SK-N-SH (cell line): ENCODE measurements at regions of chr1 and their contacts with region 1.

Region 1: DNA sequence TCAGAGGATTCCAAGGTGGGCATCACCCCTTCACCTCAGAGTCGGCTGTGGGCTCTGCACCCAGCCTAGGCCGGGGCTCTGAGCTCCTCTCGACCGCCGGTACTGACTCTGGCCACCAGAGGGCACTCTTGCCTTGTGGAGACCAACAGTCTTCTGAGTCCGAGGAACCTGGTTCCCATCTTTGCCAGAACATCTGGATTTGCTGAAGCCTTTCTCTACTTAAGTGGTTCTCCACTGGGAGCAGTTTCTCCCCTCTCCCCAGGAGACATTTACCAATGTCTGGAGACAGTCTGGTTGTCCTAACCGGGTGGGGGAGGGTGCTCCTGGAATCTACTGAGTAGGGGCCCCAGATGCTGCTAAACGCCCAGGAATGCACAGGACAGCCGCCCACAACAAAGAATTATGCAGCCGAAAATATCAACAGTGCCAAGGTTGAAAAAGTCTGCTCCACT is 9.4 kb downstream of the ETV3L start:
- DNase-seq: peak; percentile 88
- H3K4me3 ChIP-seq: peak overlapping the region in 1 of 2 experiments; percentile 22; a peak in 1 of 4 replicates
- H3K27ac ChIP-seq: no peak overlapping the region
- H3K4me1 ChIP-seq: peaks cover 6 to 7% of the 10 kb centered on the region in 2 experiments; a peak in 2 of 4 replicates
- H3K27me3 ChIP-seq: no peaks in the 10 kb centered on the region
- CTCF ChIP-seq: peak; percentile 94
- EP300 ChIP-seq: no peak
- RAD21 ChIP-seq: peak; percentile 97

Region 2: GRCh38 chr1:156480411-156481192 is 609.6 kb before region 1 on chr1:
- CTCF ChIA-PET with region 1: no interaction called
- POLR2A ChIA-PET with region 1: no interaction called
- DNase-seq: peak; percentile 84
- H3K4me3 ChIP-seq: peak overlapping the region in 1 of 2 experiments; percentile 35; a peak in 1 of 4 replicates
- H3K27ac ChIP-seq: no peak overlapping the region
- H3K4me1 ChIP-seq: peaks cover 0 to 5% of the 10 kb centered on the region in 2 experiments; a peak in 1 of 4 replicates
- H3K27me3 ChIP-seq: no peaks in the 10 kb centered on the region
- CTCF ChIP-seq: peak; percentile 70
- EP300 ChIP-seq: no peak
- RAD21 ChIP-seq: peak; percentile 52

Region 3: GRCh38 chr1:157073944-157074767 is 16.1 kb before region 1 on chr1:
- CTCF ChIA-PET with region 1: interaction called, 32 read pairs
- POLR2A ChIA-PET with region 1: no interaction called
- DNase-seq: peak; percentile 67
- H3K4me3 ChIP-seq: peak overlapping the region in 1 of 2 experiments; percentile 19; a peak in 1 of 4 replicates
- H3K27ac ChIP-seq: no peak overlapping the region
- H3K4me1 ChIP-seq: peaks cover 0 to 8% of the 10 kb centered on the region in 2 experiments; a peak in 2 of 4 replicates
- H3K27me3 ChIP-seq: peaks cover 12% of the 10 kb centered on the region; the same call in 1 of the 2 replicates
- CTCF ChIP-seq: peak; percentile 57
- EP300 ChIP-seq: no peak
- RAD21 ChIP-seq: peak; percentile 62

Region 4: DNA sequence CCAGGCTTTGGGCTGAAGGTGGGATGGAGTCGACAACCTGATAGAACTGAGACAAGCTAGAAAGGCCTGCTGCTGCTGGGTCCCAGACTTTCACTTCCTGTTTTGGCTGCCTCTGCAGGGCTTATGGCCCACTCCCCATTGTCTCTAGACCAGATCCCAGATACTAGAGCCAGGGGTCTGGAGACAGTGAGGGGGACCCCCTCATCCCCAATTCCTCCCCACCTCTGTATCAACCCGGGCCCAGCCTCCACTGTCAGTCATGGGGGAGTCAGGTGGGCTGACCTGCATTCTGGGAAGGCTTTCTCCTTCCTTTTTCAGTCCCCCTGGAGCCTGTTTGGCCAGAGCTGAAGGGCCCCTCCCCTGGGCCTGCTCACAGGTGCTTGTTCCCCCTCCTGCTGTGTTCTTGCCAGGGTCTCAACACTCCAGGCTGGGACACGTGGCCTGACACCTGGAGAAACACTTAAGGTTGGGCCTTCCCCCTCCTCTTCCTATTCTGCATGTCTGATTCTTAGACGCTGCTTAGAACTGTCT is 27.4 kb after region 1 on chr1:
- CTCF ChIA-PET with region 1: interaction called, 14 read pairs
- POLR2A ChIA-PET with region 1: no interaction called
- DNase-seq: no peak
- H3K4me3 ChIP-seq: no peak overlapping the region
- H3K27ac ChIP-seq: no peak overlapping the region
- H3K4me1 ChIP-seq: no peaks in the 10 kb centered on the region
- H3K27me3 ChIP-seq: no peaks in the 10 kb centered on the region
- CTCF ChIP-seq: no peak
- EP300 ChIP-seq: no peak
- RAD21 ChIP-seq: no peak

Region 5: DNA sequence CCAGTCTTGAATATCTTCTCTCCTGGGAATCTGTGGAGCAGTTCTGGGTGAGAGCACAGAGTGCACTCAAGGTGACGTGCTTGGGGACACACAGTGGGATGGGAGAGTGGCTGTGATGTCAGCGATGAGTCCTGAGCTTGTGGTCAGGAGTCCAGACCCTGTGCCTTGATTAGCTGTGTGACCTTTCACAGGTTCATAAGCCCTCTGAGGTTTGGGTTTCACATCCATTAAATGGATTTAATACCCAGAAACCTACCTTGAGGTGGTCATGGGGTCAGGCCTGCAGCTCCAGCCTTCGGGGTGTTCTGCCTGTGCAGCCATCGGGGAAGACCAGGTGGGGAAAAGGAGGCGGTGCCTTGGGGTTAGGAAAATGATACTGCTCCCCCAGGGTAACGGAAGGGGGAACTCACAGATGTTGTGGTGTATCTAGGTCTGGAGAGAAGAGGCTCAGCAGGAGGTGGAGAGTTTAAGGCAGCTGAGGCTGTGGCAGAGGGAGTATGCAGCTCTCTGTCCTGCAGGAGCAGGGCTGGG is 86.4 kb after region 1 on chr1:
- CTCF ChIA-PET with region 1: interaction called, 26 read pairs
- POLR2A ChIA-PET with region 1: no interaction called
- DNase-seq: no peak
- H3K4me3 ChIP-seq: no peak overlapping the region
- H3K27ac ChIP-seq: no peak overlapping the region
- H3K4me1 ChIP-seq: no peaks in the 10 kb centered on the region
- H3K27me3 ChIP-seq: peaks cover 47% of the 10 kb centered on the region; the same call in 1 of the 2 replicates
- CTCF ChIP-seq: no peak
- EP300 ChIP-seq: no peak
- RAD21 ChIP-seq: no peak

Region 6: GRCh38 chr1:157252473-157252872 is 162.3 kb after region 1 on chr1:
- CTCF ChIA-PET with region 1: no interaction called
- POLR2A ChIA-PET with region 1: no interaction called
- DNase-seq: no peak
- H3K4me3 ChIP-seq: no peak overlapping the region
- H3K27ac ChIP-seq: no peak overlapping the region
- H3K4me1 ChIP-seq: no peaks in the 10 kb centered on the region
- H3K27me3 ChIP-seq: no peaks in the 10 kb centered on the region
- CTCF ChIP-seq: no peak
- EP300 ChIP-seq: no peak
- RAD21 ChIP-seq: no peak